Activated T-helper 1 cell treated with anti-CD3 and anti-CD28 coated beads, Interleukin-12 subunit alpha, Interleukin-12 subunit beta, Interleukin-2, Interleukin-4 antibody, amounts not matched to agents 30 ng/mL and 10 ng/mL and 1 ng/mL, durations not matched to agents 14 hours and 24 hours and 36 hours (primary cell): ENCODE measurements at regions of chr15 and their contacts with region 1.

Region 1: DNA sequence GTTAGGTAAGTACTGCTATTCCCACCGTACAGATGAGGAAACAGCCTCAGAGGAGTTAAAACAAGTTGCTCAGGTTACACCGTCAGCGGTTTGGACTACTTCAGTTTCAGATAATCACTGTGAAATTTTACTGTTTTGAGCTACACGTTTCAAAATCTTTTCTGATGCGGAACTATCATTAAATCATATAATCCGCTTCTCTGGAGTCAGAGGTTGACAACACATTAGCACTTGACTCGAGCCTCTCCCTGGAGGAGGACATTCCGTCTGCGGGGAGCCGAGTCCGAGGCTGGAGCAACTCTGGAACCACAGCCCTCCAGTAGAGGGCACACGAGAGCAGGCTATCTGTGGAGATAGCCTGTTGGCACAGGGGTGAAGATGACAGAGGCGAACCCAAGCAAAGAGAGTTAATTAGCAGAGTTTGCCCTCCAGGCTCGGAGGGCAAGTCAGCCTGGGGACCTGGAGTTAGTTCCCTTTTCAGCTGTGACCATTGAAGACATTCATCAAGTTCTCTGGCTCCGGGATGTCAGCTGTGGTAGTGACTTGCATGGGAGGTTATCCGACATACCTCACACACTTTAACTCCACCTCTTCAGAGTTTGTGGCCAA is 131.2 kb downstream of the IGF1R start:
- DNase-seq: peak; percentile 49
- H3K4me3 Mint-ChIP-seq: peak overlapping the region; percentile 30
- H3K27ac Mint-ChIP-seq: no peak overlapping the region
- H3K4me1 Mint-ChIP-seq: peaks cover 28% of the 10 kb centered on the region
- H3K27me3 Mint-ChIP-seq: peaks cover 5% of the 10 kb centered on the region

Region 2: DNA sequence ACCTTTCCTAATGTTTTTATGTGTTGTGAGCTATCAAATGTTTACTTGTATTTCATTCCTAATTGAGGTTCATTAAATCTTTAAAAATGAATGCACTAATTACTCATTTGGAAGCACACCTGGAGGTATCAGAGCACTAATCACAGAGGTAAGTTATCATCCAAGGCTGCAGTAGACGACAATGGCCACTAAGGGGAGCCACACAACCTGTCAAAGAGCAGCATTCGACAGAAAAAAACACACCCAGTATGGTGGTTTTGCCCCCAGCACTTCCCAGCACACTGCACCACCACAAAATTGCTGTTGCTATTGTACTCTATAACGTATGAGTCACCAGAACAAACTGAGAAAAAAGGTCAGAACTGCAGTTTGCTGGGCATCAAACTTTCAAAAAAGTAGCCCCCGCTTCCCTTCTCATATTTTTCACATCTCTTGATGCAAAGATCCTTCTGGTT is 337.2 kb before region 1 on chr15:
- intact Hi-C with region 1: loop called (anchors 10 kb)
- DNase-seq: peak; percentile 34
- H3K4me3 Mint-ChIP-seq: no peak overlapping the region
- H3K27ac Mint-ChIP-seq: no peak overlapping the region
- H3K4me1 Mint-ChIP-seq: peaks cover 5% of the 10 kb centered on the region
- H3K27me3 Mint-ChIP-seq: peaks cover 5% of the 10 kb centered on the region

Region 3: DNA sequence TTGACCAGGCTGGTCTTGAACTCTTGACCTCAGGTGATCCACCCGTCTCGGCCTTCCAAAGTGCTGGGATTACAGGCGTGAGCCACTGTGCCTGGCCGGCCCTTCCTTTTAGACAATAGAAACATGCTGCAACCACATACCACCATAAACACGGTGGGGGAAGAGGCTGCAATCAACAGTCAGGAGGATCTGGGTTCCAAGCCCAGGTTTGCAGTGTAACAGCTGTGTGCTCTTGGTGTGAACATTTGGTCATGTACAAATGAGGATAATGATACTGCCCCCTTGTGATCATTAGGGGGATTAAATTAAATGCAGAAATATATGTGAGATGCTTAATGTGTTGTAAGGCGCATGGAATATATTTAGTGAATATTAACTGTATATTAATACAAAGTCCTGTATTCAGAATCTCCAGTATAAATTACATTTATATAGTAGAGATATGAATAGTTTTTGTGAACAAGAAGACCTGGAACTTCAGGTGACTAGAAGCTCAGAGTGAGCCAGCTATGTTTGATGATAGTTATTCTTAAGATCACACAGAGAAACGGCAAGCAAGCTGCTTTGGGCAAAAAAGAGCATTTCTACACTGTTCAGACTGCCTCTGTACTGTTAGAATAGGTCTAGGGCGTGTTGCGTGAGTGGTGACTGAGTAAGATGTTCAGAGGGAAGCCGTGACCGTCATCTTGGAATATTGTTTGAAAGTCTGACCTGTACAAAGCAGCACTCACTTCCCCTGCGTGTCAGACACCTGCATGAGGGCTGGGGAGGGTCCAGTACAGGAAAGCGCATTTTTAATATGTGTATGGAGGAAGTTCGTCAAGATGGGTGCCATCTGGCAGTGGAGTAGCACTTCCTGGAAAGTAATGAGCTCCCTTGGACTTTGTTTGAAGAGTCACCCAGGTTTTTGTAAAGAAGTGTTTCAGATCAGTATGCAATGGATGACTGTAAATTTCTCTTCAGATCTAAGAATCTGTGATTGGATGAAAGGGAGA is 102.3 kb after region 1 on chr15:
- intact Hi-C with region 1: loop called (anchors 1 kb)
- DNase-seq: no peak
- H3K4me3 Mint-ChIP-seq: no peak overlapping the region
- H3K27ac Mint-ChIP-seq: no peak overlapping the region
- H3K4me1 Mint-ChIP-seq: peaks cover 3% of the 10 kb centered on the region
- H3K27me3 Mint-ChIP-seq: no peaks in the 10 kb centered on the region

Region 4: GRCh38 chr15:99059010-99059981 is 279.7 kb after region 1 on chr15:
- intact Hi-C with region 1: loop called (anchors 2 kb)
- DNase-seq: peak; percentile 48
- H3K4me3 Mint-ChIP-seq: peak overlapping the region; percentile 70
- H3K27ac Mint-ChIP-seq: no peak overlapping the region
- H3K4me1 Mint-ChIP-seq: peaks cover 8% of the 10 kb centered on the region
- H3K27me3 Mint-ChIP-seq: peaks cover 29% of the 10 kb centered on the region

Region 5: DNA sequence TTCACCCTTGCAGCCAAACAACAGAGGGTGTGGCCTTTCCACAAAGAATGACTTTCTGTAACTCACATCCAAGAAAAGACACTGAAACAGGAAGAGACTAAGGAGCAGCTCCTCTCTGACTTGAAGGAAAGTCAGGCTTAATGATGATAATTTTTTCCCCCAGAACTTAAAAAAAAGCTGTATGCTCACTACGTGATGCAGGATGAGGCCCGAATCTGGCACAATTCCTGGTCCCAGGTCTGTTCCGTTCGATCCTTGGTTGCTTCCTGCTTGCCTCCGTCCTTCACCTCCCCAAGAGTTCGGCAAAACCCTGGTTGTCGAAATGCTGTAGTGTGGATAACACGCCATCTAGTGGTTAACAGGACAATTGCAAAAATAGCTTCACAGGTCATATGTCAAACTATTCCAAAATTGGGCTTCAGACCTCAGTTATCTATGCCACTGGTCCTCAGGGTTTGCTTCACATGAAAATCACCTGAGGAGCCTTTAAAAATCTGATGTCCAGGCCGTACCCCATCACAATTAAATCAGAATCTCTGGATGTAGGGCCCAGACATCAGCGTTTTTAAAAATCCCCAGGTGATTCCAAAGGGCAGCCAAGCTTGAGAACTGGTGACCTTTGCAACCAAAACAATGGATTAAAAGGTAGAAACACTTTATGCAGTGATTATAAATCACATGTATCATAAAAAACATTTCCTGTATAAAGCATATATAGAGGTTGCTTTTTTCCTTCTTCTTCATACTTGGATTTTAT is 297.2 kb after region 1 on chr15:
- intact Hi-C with region 1: loop called (anchors 1 kb)
- DNase-seq: peak; percentile 31
- H3K4me3 Mint-ChIP-seq: peak overlapping the region; percentile 77
- H3K27ac Mint-ChIP-seq: no peak overlapping the region
- H3K4me1 Mint-ChIP-seq: peaks cover 7% of the 10 kb centered on the region
- H3K27me3 Mint-ChIP-seq: peaks cover 11% of the 10 kb centered on the region

Region 6: GRCh38 chr15:99213187-99213811 is 433.7 kb after region 1 on chr15:
- intact Hi-C with region 1: loop called (anchors 5 kb)
- DNase-seq: peak; percentile 43
- H3K4me3 Mint-ChIP-seq: no peak overlapping the region
- H3K27ac Mint-ChIP-seq: no peak overlapping the region
- H3K4me1 Mint-ChIP-seq: no peaks in the 10 kb centered on the region
- H3K27me3 Mint-ChIP-seq: peaks cover 5% of the 10 kb centered on the region